ENCODE measurements at regions of chr1 and their contacts with region 1.

Region 1: DNA sequence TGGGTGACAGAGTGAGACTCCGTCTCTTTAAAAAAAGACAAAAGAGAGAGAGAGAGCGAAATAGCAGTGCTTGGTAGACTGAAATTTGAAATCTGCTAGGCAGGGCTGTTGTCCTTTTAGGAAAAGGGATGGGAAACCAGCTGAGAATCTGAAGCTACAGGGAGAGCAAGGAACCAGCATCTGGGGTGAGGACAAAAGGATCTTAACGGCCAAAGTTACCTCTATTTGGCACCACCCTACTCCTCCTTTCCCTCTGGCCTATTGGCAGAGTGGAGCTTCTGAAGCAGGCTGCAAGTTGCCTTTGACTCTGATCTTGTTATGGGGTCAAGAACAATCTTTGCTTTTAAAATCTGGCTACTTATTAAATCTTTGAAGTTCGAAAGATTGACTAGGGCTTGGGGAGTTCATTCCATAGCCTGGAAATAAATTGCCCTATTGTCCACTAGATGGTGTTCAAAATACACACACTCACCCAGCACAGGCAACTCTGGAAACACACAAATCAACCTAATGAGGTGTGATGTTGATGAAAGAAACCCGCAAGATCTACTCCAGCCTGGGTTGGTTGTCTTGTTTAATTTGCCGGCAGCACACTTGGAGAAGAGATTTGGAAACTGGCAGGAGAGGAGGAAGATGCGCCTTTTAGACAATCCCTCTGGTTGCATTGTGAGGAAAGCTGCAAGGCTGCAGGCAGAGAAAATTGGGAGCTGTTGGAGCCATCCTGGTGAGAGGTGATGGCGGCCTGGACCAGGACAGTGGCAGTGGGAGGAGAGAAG is 16.5 kb upstream of the PARP1 start:
- DNase-seq: no peak
- ATAC-seq: peak; percentile 88
- H3K4me3 ChIP-seq: no peak overlapping the region
- H3K27ac ChIP-seq: no peak overlapping the region
- H3K4me1 ChIP-seq: no peaks in the 10 kb centered on the region
- H3K27me3 ChIP-seq: peaks cover 2 to 3% of the 10 kb centered on the region in 2 experiments; a peak in 1 of 5 replicates
- CTCF ChIP-seq: peak; percentile 75
- EP300 ChIP-seq: no peak
- POLR2A ChIP-seq: no peak
- RAD21 ChIP-seq: no peak

Region 2: GRCh38 chr1:226569879-226570547 is 145.6 kb after region 1 on chr1:
- CTCF ChIA-PET with region 1: no interaction called
- POLR2A ChIA-PET with region 1: no interaction called
- in situ Hi-C with region 1: no loop called
- intact Hi-C with region 1: loop called (anchors 1 kb)
- DNase-seq: peak; percentile 16
- ATAC-seq: peak; percentile 96
- H3K4me3 ChIP-seq: no peak overlapping the region
- H3K27ac ChIP-seq: no peak overlapping the region
- H3K4me1 ChIP-seq: no peaks in the 10 kb centered on the region
- H3K27me3 ChIP-seq: peaks cover 0 to 1% of the 10 kb centered on the region in 2 experiments; a peak in 3 of 5 replicates
- CTCF ChIP-seq: peak; percentile 21; the same call in 1 of the 2 replicates
- EP300 ChIP-seq: no peak
- POLR2A ChIP-seq: no peak
- RAD21 ChIP-seq: no peak

Region 3: GRCh38 chr1:226608699-226609505 is 184.5 kb after region 1 on chr1:
- CTCF ChIA-PET with region 1: interaction called, 6 read pairs
- POLR2A ChIA-PET with region 1: no interaction called
- in situ Hi-C with region 1: loop called (anchors 10 kb)
- intact Hi-C with region 1: loop called (anchors 10 kb)
- DNase-seq: peak; percentile 54
- ATAC-seq: peak; percentile 87
- H3K4me3 ChIP-seq: no peak overlapping the region
- H3K27ac ChIP-seq: no peak overlapping the region
- H3K4me1 ChIP-seq: no peaks in the 10 kb centered on the region
- H3K27me3 ChIP-seq: peaks cover 2 to 20% of the 10 kb centered on the region in 2 experiments; a peak in 3 of 5 replicates
- CTCF ChIP-seq: peak; percentile 80
- EP300 ChIP-seq: no peak
- POLR2A ChIP-seq: no peak
- RAD21 ChIP-seq: peak; percentile 48; the same call in 1 of the 2 replicates